Activated CD8-positive, alpha-beta memory T cell treated with anti-CD3 and anti-CD28 coated beads, Interleukin-2, amount 10 ng/mL, durations not matched to agents 7 days and 5 days (primary cell): ENCODE measurements at regions of chr4 and their contacts with region 1.

Region 1: GRCh38 chr4:87375719-87376291 is 15.2 kb downstream of the HSD17B11 start:
- DNase-seq: no peak
- ATAC-seq: peak; percentile 49
- H3K4me3 Mint-ChIP-seq: no peak overlapping the region
- H3K27ac Mint-ChIP-seq: no peak overlapping the region
- H3K4me1 Mint-ChIP-seq: no peaks in the 10 kb centered on the region
- H3K27me3 Mint-ChIP-seq: no peaks in the 10 kb centered on the region

Region 2: GRCh38 chr4:87363567-87363966 is 12.2 kb before region 1 on chr4:
- CTCF ChIA-PET with region 1: interaction called, 12 read pairs
- DNase-seq: no peak
- ATAC-seq: no peak
- H3K4me3 Mint-ChIP-seq: no peak overlapping the region
- H3K27ac Mint-ChIP-seq: no peak overlapping the region
- H3K4me1 Mint-ChIP-seq: no peaks in the 10 kb centered on the region
- H3K27me3 Mint-ChIP-seq: no peaks in the 10 kb centered on the region

Region 3: DNA sequence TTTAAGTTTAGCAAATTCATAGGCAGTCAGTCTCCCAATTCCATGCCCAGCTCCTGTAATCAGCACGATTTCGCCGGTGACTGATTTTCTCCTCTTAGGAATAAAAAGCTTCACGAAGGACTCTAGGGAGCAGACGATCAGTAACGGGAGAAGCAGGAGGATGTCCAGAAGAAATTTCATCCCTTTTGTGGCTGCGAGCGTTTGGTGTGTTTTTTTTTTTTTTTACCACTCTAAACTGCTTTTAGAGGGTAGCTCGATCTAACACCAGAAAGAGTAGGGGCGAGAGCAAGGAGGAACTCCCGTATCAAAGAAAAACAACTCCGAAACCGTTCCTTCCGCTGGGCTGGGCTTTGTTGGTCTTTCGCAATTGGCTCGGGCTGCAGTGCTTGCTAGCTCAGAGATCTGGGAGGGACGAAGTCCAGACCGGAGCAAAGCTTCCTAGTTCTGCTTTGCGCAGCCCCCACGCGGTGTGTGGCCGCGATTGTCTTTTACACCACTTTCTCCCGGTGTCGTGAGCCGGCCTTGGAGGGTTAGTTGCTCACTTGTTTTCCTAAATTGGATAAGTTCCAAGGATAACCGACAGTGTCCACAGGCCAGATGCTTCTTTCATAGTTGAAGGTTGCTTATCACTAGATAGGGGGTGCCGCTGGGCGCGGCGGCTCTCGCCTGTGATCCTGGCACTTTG is 15.2 kb after region 1 on chr4 and contains the start of gene HSD17B11:
- CTCF ChIA-PET with region 1: interaction called, 39 read pairs
- DNase-seq: peak; percentile 92
- ATAC-seq: peak; percentile 99
- H3K4me3 Mint-ChIP-seq: peak within 1 kb of the TSS; percentile 81
- H3K27ac Mint-ChIP-seq: peak within 1 kb of the TSS; percentile 84
- H3K4me1 Mint-ChIP-seq: peaks cover 34% of the 10 kb centered on the region
- H3K27me3 Mint-ChIP-seq: no peaks in the 10 kb centered on the region
- total RNA-seq, gene HSD17B11: 30.0 to 31.9 TPM

Region 4: DNA sequence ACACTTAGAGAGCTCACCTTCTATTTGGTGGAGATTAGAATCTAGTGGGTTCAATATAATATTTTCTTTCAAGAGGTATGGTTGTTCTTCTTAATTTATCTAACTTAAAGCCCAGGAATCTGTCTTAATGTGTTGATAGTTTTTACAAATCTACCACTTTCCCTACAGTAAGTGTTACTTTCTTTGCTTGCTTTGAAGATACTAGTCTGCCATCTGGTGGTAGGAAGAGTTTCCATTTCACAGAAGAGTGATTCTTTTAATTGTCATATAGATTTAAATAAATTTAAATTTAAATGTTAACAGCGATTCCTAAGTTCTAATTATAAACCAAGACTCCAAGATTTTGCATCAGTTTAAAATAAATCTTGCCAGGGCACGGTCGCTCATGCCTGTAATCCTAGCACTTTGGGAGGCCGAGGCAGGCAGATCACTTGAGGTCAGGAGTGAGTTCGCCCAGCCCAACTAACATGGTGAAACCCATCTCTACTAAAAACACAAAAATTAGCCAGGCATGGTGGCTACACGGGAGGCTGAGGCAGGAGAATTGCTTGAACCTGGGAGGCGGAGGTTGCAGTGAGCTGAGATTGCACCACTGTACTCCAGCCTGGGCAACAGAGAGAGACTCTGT is 90.0 kb after region 1 on chr4:
- CTCF ChIA-PET with region 1: interaction called, 27 read pairs
- DNase-seq: no peak
- ATAC-seq: peak; percentile 42
- H3K4me3 Mint-ChIP-seq: no peak overlapping the region
- H3K27ac Mint-ChIP-seq: no peak overlapping the region
- H3K4me1 Mint-ChIP-seq: peaks cover 4% of the 10 kb centered on the region
- H3K27me3 Mint-ChIP-seq: no peaks in the 10 kb centered on the region